ENCODE measurements at regions of chr5 and their contacts with region 1.

Region 1: GRCh38 chr5:177086924-177087706 is 400 bp downstream of the FGFR4 start:
- DNase-seq: peak; percentile 39 to 85 (median 59)
- ATAC-seq: peak; percentile 87
- H3K4me3 ChIP-seq: peak overlapping the region; percentile 54
- H3K4me3 Mint-ChIP-seq: no peak overlapping the region
- H3K27ac ChIP-seq: no peak overlapping the region
- H3K27ac Mint-ChIP-seq: no peak overlapping the region
- H3K4me1 ChIP-seq: peaks cover 15% of the 10 kb centered on the region
- H3K4me1 Mint-ChIP-seq: peaks cover 6% of the 10 kb centered on the region
- H3K27me3 ChIP-seq: peaks cover 5 to 10% of the 10 kb centered on the region in 2 experiments
- H3K27me3 Mint-ChIP-seq: peaks cover 15% of the 10 kb centered on the region
- CTCF ChIP-seq: peak; percentile 69

Region 2: GRCh38 chr5:177049285-177049684 is 37.8 kb before region 1 on chr5:
- CTCF ChIA-PET with region 1: no interaction called
- POLR2A ChIA-PET with region 1: no interaction called
- intact Hi-C with region 1: no loop called
- DNase-seq: peak in 2 of 14 experiments; percentile 11 to 24
- ATAC-seq: no peak
- H3K4me3 ChIP-seq: no peak overlapping the region
- H3K4me3 Mint-ChIP-seq: no peak overlapping the region
- H3K27ac ChIP-seq: no peak overlapping the region
- H3K27ac Mint-ChIP-seq: no peak overlapping the region
- H3K4me1 ChIP-seq: no peaks in the 10 kb centered on the region
- H3K4me1 Mint-ChIP-seq: no peaks in the 10 kb centered on the region
- H3K27me3 ChIP-seq: no peaks in the 10 kb centered on the region
- H3K27me3 Mint-ChIP-seq: no peaks in the 10 kb centered on the region
- CTCF ChIP-seq: no peak

Region 3: GRCh38 chr5:177071666-177072385 is 15.3 kb before region 1 on chr5:
- CTCF ChIA-PET with region 1: interaction called, 18 read pairs
- POLR2A ChIA-PET with region 1: interaction called, 10 read pairs
- intact Hi-C with region 1: no loop called
- DNase-seq: peak in 12 of 14 experiments; percentile 45 to 82 (median 60)
- ATAC-seq: peak; percentile 90
- H3K4me3 ChIP-seq: no peak overlapping the region
- H3K4me3 Mint-ChIP-seq: no peak overlapping the region
- H3K27ac ChIP-seq: no peak overlapping the region
- H3K27ac Mint-ChIP-seq: no peak overlapping the region
- H3K4me1 ChIP-seq: peaks cover 4% of the 10 kb centered on the region
- H3K4me1 Mint-ChIP-seq: peaks cover 11% of the 10 kb centered on the region
- H3K27me3 ChIP-seq: no peaks in the 10 kb centered on the region
- H3K27me3 Mint-ChIP-seq: no peaks in the 10 kb centered on the region
- CTCF ChIP-seq: peak; percentile 89

Region 4: GRCh38 chr5:177146891-177147638 is 60.0 kb after region 1 on chr5:
- CTCF ChIA-PET with region 1: no interaction called
- POLR2A ChIA-PET with region 1: no interaction called
- intact Hi-C with region 1: no loop called
- DNase-seq: peak in 1 of 14 experiments; percentile 4
- ATAC-seq: no peak
- H3K4me3 ChIP-seq: no peak overlapping the region
- H3K4me3 Mint-ChIP-seq: no peak overlapping the region
- H3K27ac ChIP-seq: no peak overlapping the region
- H3K27ac Mint-ChIP-seq: no peak overlapping the region
- H3K4me1 ChIP-seq: peaks cover 3% of the 10 kb centered on the region
- H3K4me1 Mint-ChIP-seq: peaks cover 18% of the 10 kb centered on the region
- H3K27me3 ChIP-seq: no peaks in the 10 kb centered on the region
- H3K27me3 Mint-ChIP-seq: no peaks in the 10 kb centered on the region
- CTCF ChIP-seq: no peak

Measured in CD4-positive, alpha-beta T cell (primary cell).